ENCODE measurements at regions of chr21 and their contacts with region 1.

Region 1: GRCh38 chr21:25615880-25616279 is 8.6 kb upstream of the MRPL39 start:
- DNase-seq: no peak
- H3K4me3 ChIP-seq: no peak overlapping the region
- H3K27ac ChIP-seq: no peak overlapping the region
- H3K4me1 ChIP-seq: no peaks in the 10 kb centered on the region
- H3K27me3 ChIP-seq: no peaks in the 10 kb centered on the region
- CTCF ChIP-seq: no peak

Region 2: DNA sequence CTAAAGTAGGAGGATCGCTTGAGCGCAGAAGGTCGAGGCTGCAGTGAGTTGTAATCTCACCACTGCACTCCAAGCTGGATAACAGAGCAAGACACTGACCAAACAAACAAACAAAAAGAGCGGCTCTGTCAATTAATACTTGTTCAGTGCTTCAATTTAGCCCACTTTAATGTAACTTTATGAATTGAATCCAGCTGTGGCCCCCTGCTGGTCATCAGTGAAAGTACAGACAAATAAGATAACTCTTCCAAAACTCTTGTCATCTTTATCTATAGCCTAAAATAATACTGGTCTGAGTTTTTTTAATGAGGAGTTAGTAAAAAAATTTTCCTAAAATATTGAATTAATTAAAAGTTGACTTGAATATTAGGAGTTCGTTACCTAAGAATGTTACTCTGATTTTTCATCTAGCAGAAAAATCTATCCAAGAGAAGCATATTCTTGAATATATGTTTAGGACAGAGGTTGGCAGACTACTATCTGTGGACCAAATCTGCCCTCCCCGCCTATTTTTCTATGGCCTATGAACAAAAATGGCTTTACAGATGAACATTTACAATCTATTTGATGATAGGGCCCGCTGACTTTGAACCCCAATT is 92.7 kb after region 1 on chr21:
- intact Hi-C with region 1: loop called (anchors 10 kb)
- DNase-seq: peak in 3 of 5 donors; percentile 21 to 70 (median 34)
- H3K4me3 ChIP-seq: no peak overlapping the region
- H3K27ac ChIP-seq: no peak overlapping the region
- H3K4me1 ChIP-seq: no peaks in the 10 kb centered on the region
- H3K27me3 ChIP-seq: no peaks in the 10 kb centered on the region
- CTCF ChIP-seq: peak; percentile 65